ENCODE measurements at regions of chr6 and their contacts with region 1.

Region 1: DNA sequence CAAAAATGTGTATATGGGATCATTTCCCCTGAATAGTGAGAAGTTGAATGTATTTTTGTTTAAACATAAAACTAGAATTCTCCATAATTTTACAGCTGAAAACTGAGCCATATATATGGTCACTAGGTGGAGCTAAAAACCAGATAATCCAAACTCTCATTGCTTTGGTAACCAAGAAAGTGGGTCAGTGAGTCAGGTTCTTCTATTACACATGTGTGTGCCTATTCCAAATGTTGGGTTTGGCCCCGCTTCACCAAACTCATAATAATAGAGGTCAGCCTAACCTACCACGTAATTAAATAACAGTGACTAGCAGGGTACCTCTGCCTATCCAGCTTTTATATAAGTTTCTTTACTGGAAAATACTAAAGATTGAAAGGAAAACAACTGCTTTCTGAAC is 19.3 kb upstream of the RNGTT start:
- H3K4me3 ChIP-seq: no peak overlapping the region
- H3K27ac ChIP-seq: no peak overlapping the region
- H3K4me1 ChIP-seq: no peaks in the 10 kb centered on the region
- CTCF ChIP-seq: peak; percentile 50; the same call in 1 of the 2 replicates

Region 2: GRCh38 chr6:88761237-88762031 is 221.3 kb before region 1 on chr6:
- CTCF ChIA-PET with region 1: no interaction called
- POLR2A ChIA-PET with region 1: no interaction called
- H3K4me3 ChIP-seq: no peak overlapping the region
- H3K27ac ChIP-seq: no peak overlapping the region
- H3K4me1 ChIP-seq: no peaks in the 10 kb centered on the region
- CTCF ChIP-seq: no peak

Region 3: GRCh38 chr6:89009624-89010059 is 26.9 kb after region 1 on chr6:
- CTCF ChIA-PET with region 1: interaction called, 11 read pairs
- POLR2A ChIA-PET with region 1: no interaction called
- H3K4me3 ChIP-seq: no peak overlapping the region
- H3K27ac ChIP-seq: no peak overlapping the region
- H3K4me1 ChIP-seq: peaks cover 10% of the 10 kb centered on the region
- CTCF ChIP-seq: no peak

Region 4: DNA sequence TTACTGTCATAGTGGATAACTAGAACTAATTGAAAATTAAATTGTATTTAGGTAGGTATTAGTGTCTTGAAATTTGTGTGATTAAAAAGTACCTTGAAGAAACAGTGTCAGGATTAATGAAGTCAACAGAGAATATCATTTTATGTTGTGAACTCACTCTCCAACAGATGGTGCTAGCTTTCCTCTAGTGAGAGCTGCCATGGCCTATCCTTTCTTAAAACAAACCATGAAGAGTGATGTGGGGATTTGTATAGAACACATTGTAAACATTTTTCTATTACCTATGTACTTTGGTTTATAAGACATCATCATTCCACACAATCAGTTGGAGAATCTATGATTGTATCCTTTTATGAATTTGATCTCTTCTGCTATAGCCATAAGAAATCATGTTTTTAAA is 139.9 kb after region 1 on chr6:
- CTCF ChIA-PET with region 1: interaction called, 46 read pairs
- POLR2A ChIA-PET with region 1: interaction called, 3 read pairs
- H3K4me3 ChIP-seq: no peak overlapping the region
- H3K27ac ChIP-seq: no peak overlapping the region
- H3K4me1 ChIP-seq: no peaks in the 10 kb centered on the region
- CTCF ChIP-seq: peak; percentile 45; the same call in 1 of the 2 replicates

Region 5: DNA sequence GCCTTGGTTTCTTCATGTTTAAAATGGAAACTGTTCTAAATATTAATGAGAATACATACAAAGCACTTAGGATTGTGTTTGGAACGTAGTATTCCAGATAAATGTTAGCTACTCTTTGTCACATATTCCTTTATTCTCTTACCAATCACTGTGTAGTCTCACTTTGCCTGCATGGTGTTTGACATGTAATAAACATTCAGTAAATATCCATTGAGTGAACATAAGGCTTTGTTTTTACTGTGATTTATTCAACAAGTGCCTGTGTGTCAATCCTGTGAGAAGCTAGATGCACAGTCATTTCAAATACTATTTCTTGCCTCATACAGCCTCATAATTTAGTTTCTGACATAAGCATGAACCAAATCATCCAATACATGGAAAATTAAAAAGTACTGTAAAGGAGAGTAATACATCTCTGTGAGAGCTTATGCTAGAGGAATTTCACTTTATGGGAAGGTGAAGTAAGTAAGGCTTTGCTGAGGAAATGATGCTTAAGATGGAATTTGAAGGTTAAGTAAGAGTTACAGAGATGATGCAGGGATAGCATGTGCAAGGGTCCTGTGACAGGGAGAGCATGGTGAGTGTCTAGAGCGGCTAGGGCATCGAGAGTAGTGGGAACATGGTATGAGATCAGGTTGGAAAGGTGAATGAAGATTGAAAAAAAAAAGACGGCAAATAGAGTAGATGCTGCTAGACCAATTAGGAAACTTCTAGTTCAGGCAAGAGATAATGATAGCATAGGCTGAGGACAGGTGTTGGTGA is 177.8 kb after region 1 on chr6:
- CTCF ChIA-PET with region 1: interaction called, 10 read pairs
- POLR2A ChIA-PET with region 1: no interaction called
- H3K4me3 ChIP-seq: no peak overlapping the region
- H3K27ac ChIP-seq: no peak overlapping the region
- H3K4me1 ChIP-seq: no peaks in the 10 kb centered on the region
- CTCF ChIP-seq: no peak

Region 6: DNA sequence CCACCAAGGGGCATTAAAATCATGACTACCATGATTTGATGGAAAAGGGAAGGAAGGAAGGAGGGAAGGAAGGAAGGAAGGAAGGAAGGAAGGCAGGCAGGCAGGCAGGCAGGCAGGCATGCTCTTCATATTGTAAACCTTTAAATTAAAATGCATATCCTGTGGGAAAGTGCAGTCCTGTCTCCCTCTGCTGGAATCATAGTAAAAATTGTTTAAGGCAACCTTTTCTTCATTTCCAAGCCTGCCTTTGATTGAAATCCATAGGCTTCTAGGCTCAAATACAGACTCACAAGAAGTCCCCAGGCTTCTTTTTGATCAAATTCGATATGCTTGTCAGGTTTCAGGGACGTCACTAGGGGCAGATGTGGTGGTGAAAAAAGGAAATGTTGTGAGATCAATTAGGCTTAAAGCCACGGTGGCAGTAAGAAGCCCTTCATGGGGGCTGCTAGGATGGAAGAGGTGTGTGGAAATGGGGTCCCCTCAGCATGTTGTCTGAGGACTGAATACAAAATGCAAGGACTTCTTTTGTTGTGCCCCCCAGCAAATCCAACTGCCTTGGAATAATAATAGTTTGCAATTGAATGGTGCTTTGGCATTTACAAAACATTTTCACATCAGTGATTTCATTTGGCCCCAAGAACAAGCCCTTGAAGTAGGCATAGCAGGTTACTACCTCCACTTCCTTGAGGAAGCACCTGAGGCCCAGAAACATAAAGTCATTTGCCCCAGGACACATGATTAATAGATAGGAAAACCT is 260.0 kb after region 1 on chr6:
- CTCF ChIA-PET with region 1: interaction called, 108 read pairs
- POLR2A ChIA-PET with region 1: no interaction called
- H3K4me3 ChIP-seq: no peak overlapping the region
- H3K27ac ChIP-seq: no peak overlapping the region
- H3K4me1 ChIP-seq: no peaks in the 10 kb centered on the region
- CTCF ChIP-seq: peak; percentile 68; the same call in 1 of the 2 replicates